GM12878 (cell line): ENCODE measurements at regions of chr1 and their contacts with region 1.

Region 1: GRCh38 chr1:221777431-221778072 is 35.7 kb upstream of the DUSP10 start:
- DNase-seq: peak; percentile 99
- ATAC-seq: peak; percentile 73
- H3K4me3 ChIP-seq: peak overlapping the region; percentile 47; the same call in 1 of the 2 replicates
- H3K27ac ChIP-seq: peak overlapping the region; percentile 89
- H3K4me1 ChIP-seq: peaks cover 61% of the 10 kb centered on the region
- H3K27me3 ChIP-seq: no peaks in the 10 kb centered on the region
- CTCF ChIP-seq: peak in 1 of 3 experiments; percentile 9; a peak in 1 of 6 replicates
- EP300 ChIP-seq: peak; percentile 97 to 98
- POLR2A ChIP-seq: no peak
- RAD21 ChIP-seq: peak; percentile 38

Region 2: DNA sequence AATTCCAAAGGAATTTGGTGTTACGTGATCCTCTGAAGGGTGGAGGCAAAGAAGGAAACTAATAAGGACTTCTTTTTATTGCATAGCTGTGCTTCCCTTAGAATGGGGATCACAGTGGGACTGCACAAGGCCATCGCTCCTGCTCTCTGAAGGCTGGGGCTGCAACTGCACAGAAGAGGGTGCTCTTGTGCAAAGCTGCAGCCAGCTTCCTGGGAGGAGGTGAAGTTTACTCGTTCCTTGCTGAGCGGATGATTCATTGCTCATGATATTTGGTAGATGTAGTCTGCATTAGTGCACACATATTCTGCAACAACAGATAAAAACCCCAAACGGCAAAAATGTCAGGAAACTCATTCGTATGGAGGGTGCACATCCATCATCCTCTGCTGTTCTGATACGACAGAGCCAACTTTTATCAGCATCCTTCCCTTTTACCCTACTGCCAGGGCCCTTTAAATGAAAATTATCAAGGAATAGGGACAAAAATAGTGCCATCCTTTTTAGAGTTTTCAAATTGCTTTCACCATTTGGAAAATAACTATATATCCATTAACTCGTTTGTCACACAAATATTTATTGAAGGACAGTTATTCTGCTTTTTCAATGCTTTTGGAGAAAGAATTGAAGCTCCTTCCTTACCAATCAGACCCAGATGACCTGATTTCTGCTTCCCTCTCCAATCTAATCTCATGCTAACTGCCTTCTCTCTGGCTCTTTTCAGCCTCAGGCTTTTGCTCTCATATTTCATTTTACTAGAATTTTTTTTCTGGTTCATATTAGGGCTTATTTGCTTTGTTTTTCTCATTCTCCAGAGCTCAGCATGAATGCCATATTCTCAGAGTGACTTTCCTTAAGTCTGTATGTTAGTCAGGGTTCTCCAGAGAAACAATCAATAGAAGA is 299.3 kb before region 1 on chr1:
- CTCF ChIA-PET with region 1: interaction called, 4 read pairs
- POLR2A ChIA-PET with region 1: no interaction called
- RAD21 ChIA-PET with region 1: no interaction called
- SMC1A ChIA-PET with region 1: interaction called, 7 read pairs
- in situ Hi-C with region 1: no loop called
- intact Hi-C with region 1: loop called (anchors 2 kb)
- DNase-seq: peak; percentile 36
- ATAC-seq: peak; percentile 100
- H3K4me3 ChIP-seq: no peak overlapping the region
- H3K27ac ChIP-seq: no peak overlapping the region
- H3K4me1 ChIP-seq: no peaks in the 10 kb centered on the region
- H3K27me3 ChIP-seq: no peaks in the 10 kb centered on the region; a peak in 1 of 4 replicates
- CTCF ChIP-seq: peak; percentile 76 to 95 (median 87); a peak in 5 of 6 replicates
- EP300 ChIP-seq: no peak
- POLR2A ChIP-seq: no peak
- RAD21 ChIP-seq: peak; percentile 92

Region 3: DNA sequence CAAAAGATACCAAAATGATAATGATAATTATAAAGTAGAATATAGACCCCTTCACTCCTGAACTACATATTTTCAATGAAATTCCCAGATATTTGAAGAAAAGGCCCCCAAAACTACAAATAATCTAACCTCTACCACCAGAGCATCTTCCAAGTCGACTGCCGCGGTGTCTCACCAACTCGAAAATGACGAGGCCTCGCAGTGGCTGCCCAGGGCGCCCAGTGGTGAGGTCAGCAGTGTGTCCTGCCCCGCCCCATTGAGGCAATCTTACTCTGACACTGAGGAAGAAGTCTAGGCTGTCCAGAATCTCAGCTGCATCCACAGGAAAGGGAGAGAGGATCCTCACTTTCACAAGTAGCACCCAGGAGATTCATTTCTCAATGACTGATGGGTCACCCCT is 40.8 kb before region 1 on chr1:
- CTCF ChIA-PET with region 1: interaction called, 64 read pairs
- POLR2A ChIA-PET with region 1: interaction called, 20 read pairs
- RAD21 ChIA-PET with region 1: interaction called, 244 read pairs
- SMC1A ChIA-PET with region 1: interaction called, 201 read pairs
- in situ Hi-C with region 1: no loop called
- intact Hi-C with region 1: no loop called
- DNase-seq: no peak
- ATAC-seq: peak; percentile 47
- H3K4me3 ChIP-seq: peak overlapping the region; percentile 90
- H3K27ac ChIP-seq: no peak overlapping the region
- H3K4me1 ChIP-seq: peaks cover 11% of the 10 kb centered on the region
- H3K27me3 ChIP-seq: no peaks in the 10 kb centered on the region
- CTCF ChIP-seq: no peak
- EP300 ChIP-seq: no peak
- POLR2A ChIP-seq: 0 out of 2 replicates have a peak, but pooled peaks have one; percentile 25
- RAD21 ChIP-seq: no peak

Region 4: GRCh38 chr1:221794079-221794670 is 16.6 kb after region 1 on chr1:
- CTCF ChIA-PET with region 1: interaction called, 17 read pairs
- POLR2A ChIA-PET with region 1: interaction called, 8 read pairs
- RAD21 ChIA-PET with region 1: interaction called, 69 read pairs
- SMC1A ChIA-PET with region 1: interaction called, 49 read pairs
- in situ Hi-C with region 1: no loop called
- intact Hi-C with region 1: loop called (anchors 1 kb)
- DNase-seq: peak; percentile 82
- ATAC-seq: peak; percentile 90
- H3K4me3 ChIP-seq: no peak overlapping the region
- H3K27ac ChIP-seq: peak overlapping the region; percentile 69
- H3K4me1 ChIP-seq: peaks cover 25% of the 10 kb centered on the region
- H3K27me3 ChIP-seq: no peaks in the 10 kb centered on the region
- CTCF ChIP-seq: no peak
- EP300 ChIP-seq: peak; percentile 88 to 93; a peak in 3 of 4 replicates
- POLR2A ChIP-seq: no peak; the same call in 1 of the 2 replicates
- RAD21 ChIP-seq: no peak

Region 5: GRCh38 chr1:221824025-221824424 is 46.5 kb after region 1 on chr1:
- CTCF ChIA-PET with region 1: interaction called, 8 read pairs
- POLR2A ChIA-PET with region 1: no interaction called
- RAD21 ChIA-PET with region 1: interaction called, 7 read pairs
- SMC1A ChIA-PET with region 1: interaction called, 10 read pairs
- in situ Hi-C with region 1: no loop called
- intact Hi-C with region 1: loop called (anchors 5 kb)
- DNase-seq: no peak
- ATAC-seq: peak; percentile 79
- H3K4me3 ChIP-seq: no peak overlapping the region
- H3K27ac ChIP-seq: peak overlapping the region; percentile 30; the same call in 1 of the 2 replicates
- H3K4me1 ChIP-seq: peaks cover 16% of the 10 kb centered on the region
- H3K27me3 ChIP-seq: no peaks in the 10 kb centered on the region
- CTCF ChIP-seq: no peak
- EP300 ChIP-seq: no peak
- POLR2A ChIP-seq: no peak
- RAD21 ChIP-seq: no peak

Region 6: GRCh38 chr1:221878134-221878533 is 100.6 kb after region 1 on chr1:
- CTCF ChIA-PET with region 1: interaction called, 4 read pairs
- POLR2A ChIA-PET with region 1: no interaction called
- RAD21 ChIA-PET with region 1: interaction called, 4 read pairs
- SMC1A ChIA-PET with region 1: interaction called, 9 read pairs
- in situ Hi-C with region 1: no loop called
- intact Hi-C with region 1: loop called (anchors 2 kb)
- DNase-seq: peak; percentile 45
- ATAC-seq: peak; percentile 78
- H3K4me3 ChIP-seq: no peak overlapping the region
- H3K27ac ChIP-seq: peak overlapping the region; percentile 18; the same call in 1 of the 2 replicates
- H3K4me1 ChIP-seq: peaks cover 22% of the 10 kb centered on the region
- H3K27me3 ChIP-seq: no peaks in the 10 kb centered on the region
- CTCF ChIP-seq: no peak
- EP300 ChIP-seq: peak; percentile 54 to 86; a peak in 2 of 4 replicates
- POLR2A ChIP-seq: no peak
- RAD21 ChIP-seq: no peak

Region 7: DNA sequence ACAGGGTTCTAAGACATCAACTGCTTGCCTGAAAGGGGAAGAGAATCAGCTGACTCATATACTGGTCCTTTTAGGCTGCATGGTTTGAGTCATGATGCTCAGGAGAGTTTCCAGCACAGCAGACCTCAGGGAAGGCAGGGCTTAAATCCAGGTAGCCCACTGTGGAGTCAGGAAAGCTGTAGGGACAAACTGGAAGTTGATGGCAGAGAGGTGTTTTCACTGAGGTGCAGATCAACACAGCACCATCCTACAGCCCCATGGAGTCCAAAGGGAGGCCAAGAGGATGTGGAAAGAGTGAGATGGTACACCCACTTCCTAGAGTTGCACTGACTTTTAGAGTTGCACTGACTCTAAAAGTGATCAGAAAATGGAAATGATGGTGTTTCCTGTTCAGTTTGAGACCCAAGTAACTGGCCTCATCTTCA is 216.7 kb after region 1 on chr1:
- CTCF ChIA-PET with region 1: no interaction called
- POLR2A ChIA-PET with region 1: interaction called, 4 read pairs
- RAD21 ChIA-PET with region 1: interaction called, 16 read pairs
- SMC1A ChIA-PET with region 1: interaction called, 4 read pairs
- in situ Hi-C with region 1: no loop called
- intact Hi-C with region 1: no loop called
- DNase-seq: peak; percentile 38
- ATAC-seq: peak; percentile 69
- H3K4me3 ChIP-seq: no peak overlapping the region
- H3K27ac ChIP-seq: no peak overlapping the region
- H3K4me1 ChIP-seq: peaks cover 17% of the 10 kb centered on the region
- H3K27me3 ChIP-seq: no peaks in the 10 kb centered on the region
- CTCF ChIP-seq: no peak
- EP300 ChIP-seq: no peak; a peak in 1 of 4 replicates
- POLR2A ChIP-seq: no peak
- RAD21 ChIP-seq: no peak